Dorsolateral prefrontal cortex (tissue), 120 donors: ENCODE measurements at regions of chr22 and their contacts with region 1.

Region 1: DNA sequence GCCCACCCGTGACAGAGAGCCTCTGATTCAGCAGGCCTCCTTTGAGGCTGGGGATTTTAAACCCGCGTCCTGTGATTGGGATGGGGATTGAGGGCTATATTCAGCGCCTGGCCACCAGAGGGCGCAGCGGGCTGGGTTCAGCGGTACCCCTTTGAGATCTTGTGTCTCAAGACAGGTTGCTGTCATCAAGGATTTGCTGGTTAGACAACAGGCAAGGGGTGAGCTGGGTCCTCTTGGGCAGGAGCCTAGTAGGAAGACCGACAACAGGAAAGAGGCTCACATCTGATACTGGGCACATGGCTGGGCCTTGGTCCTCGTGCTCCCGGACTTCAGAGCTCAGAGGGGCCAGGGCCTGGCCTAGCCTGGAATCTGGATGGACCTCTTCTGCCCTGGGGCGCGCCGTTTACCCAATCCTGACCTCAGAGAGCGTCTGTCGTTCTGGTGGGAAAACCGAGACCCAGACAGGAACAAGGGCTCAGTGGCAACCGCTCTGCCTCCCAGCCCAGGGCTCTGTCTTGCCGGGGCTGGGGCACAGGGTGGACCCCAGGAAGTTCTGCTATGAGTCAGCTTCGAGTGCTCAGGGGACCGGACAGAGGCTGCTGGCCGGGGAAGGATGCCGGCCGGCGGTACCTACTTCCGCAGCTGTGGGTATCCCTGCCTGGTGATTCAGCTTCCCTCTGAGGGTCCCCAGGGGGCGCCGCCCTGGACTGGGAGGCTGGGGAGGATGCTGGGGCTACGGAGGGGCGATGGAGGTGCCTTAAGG is 929 bp upstream of the SLC35E4 start:
- DNase-seq: peak; percentile 83 to 95 (median 92)
- H3K4me3 ChIP-seq: peak overlapping the region; percentile 49 to 92 (median 80)
- H3K27ac ChIP-seq: peak overlapping the region; percentile 62 to 98 (median 95)
- H3K27me3 ChIP-seq: no peaks in the 10 kb centered on the region
- CTCF ChIP-seq: peak; percentile 84 to 100 (median 97)

Region 2: DNA sequence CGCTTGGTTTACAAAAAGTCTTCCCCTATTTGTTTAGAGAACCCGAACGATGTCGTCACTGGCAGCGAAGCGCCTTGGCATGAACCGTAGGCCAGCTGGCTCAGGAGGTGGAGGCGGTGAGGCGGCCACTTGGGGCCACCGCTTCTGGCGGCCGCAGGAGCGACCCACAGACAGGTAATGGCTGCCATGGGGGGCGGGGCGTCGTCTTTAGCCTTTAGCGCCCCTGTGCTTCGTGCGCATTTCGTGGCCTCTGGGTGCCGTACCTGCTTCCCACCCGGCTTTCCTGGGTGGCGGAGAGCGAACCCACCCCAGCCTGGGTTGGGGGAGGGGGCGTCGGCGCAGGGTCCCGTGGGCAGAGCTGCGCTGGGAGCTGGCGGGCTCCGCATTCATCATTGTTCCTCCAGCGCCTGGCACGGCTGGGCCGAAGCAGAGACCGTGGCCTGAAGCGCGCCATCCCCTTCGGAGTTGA is 59.6 kb after region 1 on chr22:
- intact Hi-C with region 1: loop called (anchors 2 kb)
- DNase-seq: peak; percentile 53 to 79 (median 67)
- H3K4me3 ChIP-seq: peak overlapping the region; percentile 52 to 95 (median 74)
- H3K27ac ChIP-seq: peak overlapping the region; percentile 48 to 98 (median 95)
- H3K27me3 ChIP-seq: no peaks in the 10 kb centered on the region
- CTCF ChIP-seq: peak in 11 of 56 donors; percentile 6 to 23 (median 16)

Region 3: DNA sequence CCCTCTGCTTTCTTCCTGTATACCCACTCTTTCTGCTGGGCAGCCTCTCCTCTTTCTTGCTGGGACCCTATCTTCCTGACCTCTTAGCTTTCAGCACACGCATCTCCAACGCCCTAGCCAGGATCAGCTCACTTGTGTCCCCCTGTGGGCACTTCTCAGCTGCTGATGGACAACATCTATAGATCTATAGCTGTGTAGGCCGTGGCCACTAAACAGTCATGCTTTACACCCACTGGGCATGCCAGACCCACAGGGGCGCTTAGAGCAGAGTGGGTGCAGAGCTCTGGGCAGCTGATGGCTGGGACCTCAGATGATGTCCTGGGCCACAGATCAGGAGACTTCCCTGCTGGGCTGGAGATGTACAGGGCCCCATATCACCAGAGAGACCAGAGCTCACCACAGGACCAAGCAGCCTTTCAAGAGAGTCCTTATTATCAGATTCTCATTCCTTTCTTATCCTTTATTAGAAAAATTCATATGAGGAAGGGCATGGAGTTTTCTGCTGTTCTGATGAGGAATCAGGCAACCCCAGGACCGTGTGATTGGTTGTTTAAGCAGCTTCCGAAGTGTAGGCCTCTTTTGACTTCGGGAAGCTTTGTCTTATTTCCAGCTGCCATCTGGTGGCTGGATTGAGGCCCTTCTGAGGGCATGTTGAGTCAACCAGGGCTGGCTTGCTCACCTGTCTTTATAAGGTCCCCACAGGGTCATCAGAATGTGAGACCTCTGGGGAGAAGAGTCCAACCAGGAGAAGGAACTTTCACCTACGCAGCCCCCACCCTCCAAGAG is 120.5 kb after region 1 on chr22:
- intact Hi-C with region 1: loop called (anchors 1 kb)
- DNase-seq: peak in 9 of 10 donors; percentile 27 to 72 (median 65)
- H3K4me3 ChIP-seq: no peak overlapping the region
- H3K27ac ChIP-seq: peak overlapping the region in 33 of 59 donors; percentile 1 to 72 (median 34)
- H3K27me3 ChIP-seq: no peaks in the 10 kb centered on the region
- CTCF ChIP-seq: peak in 55 of 56 donors; percentile 47 to 85 (median 69)

Region 4: DNA sequence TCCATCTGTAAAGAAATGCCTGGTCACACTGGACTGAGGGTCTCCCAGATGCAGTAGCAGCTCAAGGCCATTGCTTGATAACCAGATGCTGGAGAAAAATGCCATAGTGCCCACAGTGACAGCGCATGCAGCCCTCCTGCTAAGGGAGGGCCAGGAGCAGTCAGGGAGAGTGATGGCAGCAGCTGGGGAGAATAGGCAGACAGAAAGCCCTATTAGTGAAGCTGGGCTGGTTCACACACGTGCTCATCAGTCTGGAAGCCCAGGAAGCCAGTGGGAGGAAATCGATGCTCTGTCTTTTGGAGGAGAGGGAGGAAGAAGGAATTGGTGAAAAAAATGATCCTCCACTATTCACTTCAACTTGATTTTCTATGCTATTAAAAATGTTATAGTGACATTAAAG is 142.9 kb after region 1 on chr22:
- intact Hi-C with region 1: no loop called
- DNase-seq: no peak
- H3K4me3 ChIP-seq: no peak overlapping the region
- H3K27ac ChIP-seq: no peak overlapping the region
- H3K27me3 ChIP-seq: no peaks in the 10 kb centered on the region
- CTCF ChIP-seq: no peak

Region 5: DNA sequence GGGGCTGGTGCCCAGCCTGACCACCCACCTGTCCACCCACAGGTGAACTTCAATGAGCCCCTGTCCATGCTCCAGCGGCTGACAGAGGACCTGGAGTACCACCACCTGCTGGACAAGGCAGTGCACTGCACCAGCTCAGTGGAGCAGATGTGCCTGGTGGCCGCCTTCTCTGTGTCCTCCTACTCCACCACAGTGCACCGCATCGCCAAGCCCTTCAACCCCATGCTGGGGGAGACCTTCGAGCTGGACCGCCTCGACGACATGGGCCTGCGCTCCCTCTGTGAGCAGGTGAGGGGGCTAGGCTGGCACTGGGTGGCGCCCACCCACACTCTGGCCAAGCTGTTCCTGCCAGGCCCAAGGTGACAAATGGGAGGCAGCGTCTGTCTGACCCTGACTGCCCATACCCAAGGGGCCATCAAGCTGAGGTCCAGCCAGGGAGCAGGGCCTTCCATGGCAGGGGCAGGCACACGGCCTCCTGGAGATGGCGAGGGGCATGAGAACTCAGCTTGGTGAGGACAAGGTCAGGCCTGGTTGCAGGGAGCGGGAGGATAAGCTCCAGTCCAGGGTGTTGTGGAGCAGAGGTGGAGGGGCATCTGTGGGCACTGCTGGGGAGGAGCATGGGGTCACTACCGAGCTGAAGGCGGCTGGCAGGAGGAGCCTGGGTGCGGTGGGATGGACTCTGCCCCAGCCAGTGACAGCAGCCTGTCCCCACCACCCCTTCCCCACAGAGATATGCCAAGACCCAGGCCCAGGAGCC is 256.2 kb after region 1 on chr22:
- intact Hi-C with region 1: loop called in 1 of 2 experiments (anchors 10 kb)
- DNase-seq: peak in 6 of 10 donors; percentile 30 to 68 (median 54)
- H3K4me3 ChIP-seq: no peak overlapping the region
- H3K27ac ChIP-seq: peak overlapping the region in 21 of 59 donors; percentile 11 to 68 (median 41)
- H3K27me3 ChIP-seq: no peaks in the 10 kb centered on the region
- CTCF ChIP-seq: peak; percentile 19 to 85 (median 73)

Region 6: DNA sequence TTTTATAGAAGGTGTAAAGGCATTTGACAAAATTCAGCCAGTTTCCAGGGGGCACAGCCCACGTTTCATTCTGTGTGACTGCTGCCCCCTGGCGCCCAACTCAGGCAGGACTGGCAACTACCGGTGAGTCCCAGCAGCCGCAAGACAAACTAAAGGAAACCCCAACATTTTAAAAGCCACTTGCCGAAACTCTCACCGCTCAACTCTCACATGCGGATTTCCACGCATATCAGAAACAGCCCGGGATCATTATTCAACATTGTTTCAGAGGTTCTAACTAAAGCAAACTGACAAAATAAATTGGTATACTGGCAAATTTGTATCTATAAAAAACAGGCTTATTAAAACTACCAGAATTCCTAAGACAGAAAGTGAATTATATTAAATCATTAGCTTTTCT is 285.8 kb after region 1 on chr22:
- intact Hi-C with region 1: loop called (anchors 2 to 10 kb)
- DNase-seq: peak; percentile 75 to 90 (median 84)
- H3K4me3 ChIP-seq: peak overlapping the region in 13 of 59 donors; percentile 3 to 64 (median 22)
- H3K27ac ChIP-seq: no peak overlapping the region
- H3K27me3 ChIP-seq: no peaks in the 10 kb centered on the region
- CTCF ChIP-seq: peak; percentile 75 to 99 (median 95)